HepG2 (cell line): ENCODE measurements at regions of chr16 and their contacts with region 1.

Region 1: GRCh38 chr16:23556881-23557778 is at the starts of genes EARS2 and UBFD1:
- DNase-seq: peak; percentile 100
- ATAC-seq: peak; percentile 96
- H3K4me3 ChIP-seq: peak within 1 kb of the TSS; percentile 96 to 98 (median 97)
- H3K27ac ChIP-seq: peak within 1 kb of the TSS; percentile 86
- H3K4me1 ChIP-seq: peaks cover 48% of the 10 kb centered on the region
- H3K27me3 ChIP-seq: peaks cover 0 to 3% of the 10 kb centered on the region in 2 experiments; a peak in 1 of 5 replicates
- CTCF ChIP-seq: peak; percentile 100
- EP300 ChIP-seq: peak in 1 of 2 experiments; percentile 70; a peak in 3 of 4 replicates
- POLR2A ChIP-seq: peak; percentile 85 to 98
- RAD21 ChIP-seq: peak; percentile 76
- total RNA-seq, gene EARS2: 80.4 and 84.2 TPM in 2 replicates
- total RNA-seq, gene UBFD1: 111 and 142 TPM in 2 replicates

Region 2: DNA sequence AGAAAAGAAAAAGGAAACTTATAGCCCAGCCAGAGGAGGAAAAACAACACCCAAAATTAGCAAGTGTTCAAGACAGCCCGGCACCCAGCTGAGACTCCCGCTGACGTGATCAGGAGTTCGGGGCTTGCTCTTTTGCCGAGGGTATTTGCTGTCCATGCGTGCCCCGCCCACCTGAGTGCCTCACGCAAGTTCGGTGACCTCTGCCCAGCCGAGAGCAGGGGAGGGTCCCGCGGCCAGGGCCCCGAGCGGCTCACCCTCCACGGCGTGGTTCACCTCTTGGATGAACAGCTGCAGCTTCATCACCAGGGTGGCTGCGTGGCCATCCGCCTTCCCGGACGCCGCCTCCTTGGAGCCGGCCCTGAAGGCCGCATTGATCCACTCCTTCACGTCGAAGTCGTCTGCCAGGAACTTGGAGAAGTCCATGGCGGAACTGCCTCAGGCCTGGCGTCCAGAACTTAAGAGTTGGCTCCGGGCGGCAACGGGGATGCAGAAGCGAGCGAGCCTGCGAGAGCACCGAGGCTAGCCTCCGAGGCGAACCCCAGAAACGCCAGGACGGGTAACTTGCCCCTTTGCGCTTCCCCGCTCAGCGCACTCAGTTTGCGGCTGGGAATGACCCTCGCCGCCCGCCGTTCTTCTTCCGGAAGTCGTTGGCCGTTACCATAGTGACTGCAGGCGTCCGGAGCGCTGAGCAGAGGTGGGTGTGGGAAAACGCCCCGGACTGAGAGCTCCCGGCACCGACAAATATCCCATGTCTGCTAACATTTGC is 104.4 kb before region 1 on chr16 and contains the start of gene COG7:
- CTCF ChIA-PET with region 1: no interaction called
- POLR2A ChIA-PET with region 1: interaction called, 3 read pairs
- in situ Hi-C with region 1: no loop called
- intact Hi-C with region 1: loop called (anchors 2 kb)
- DNase-seq: peak; percentile 87
- ATAC-seq: peak; percentile 94
- H3K4me3 ChIP-seq: peak within 1 kb of the TSS; percentile 85 to 100 (median 87)
- H3K27ac ChIP-seq: peak within 1 kb of the TSS; percentile 90
- H3K4me1 ChIP-seq: peaks cover 35% of the 10 kb centered on the region
- H3K27me3 ChIP-seq: no peaks in the 10 kb centered on the region; a peak in 1 of 5 replicates
- CTCF ChIP-seq: peak; percentile 27
- EP300 ChIP-seq: peak in 1 of 2 experiments; percentile 59; a peak in 1 of 4 replicates
- POLR2A ChIP-seq: peak; percentile 89 to 98
- RAD21 ChIP-seq: peak; percentile 57; the same call in 1 of the 2 replicates
- total RNA-seq, gene COG7: 12.6 and 15.4 TPM in 2 replicates

Region 3: DNA sequence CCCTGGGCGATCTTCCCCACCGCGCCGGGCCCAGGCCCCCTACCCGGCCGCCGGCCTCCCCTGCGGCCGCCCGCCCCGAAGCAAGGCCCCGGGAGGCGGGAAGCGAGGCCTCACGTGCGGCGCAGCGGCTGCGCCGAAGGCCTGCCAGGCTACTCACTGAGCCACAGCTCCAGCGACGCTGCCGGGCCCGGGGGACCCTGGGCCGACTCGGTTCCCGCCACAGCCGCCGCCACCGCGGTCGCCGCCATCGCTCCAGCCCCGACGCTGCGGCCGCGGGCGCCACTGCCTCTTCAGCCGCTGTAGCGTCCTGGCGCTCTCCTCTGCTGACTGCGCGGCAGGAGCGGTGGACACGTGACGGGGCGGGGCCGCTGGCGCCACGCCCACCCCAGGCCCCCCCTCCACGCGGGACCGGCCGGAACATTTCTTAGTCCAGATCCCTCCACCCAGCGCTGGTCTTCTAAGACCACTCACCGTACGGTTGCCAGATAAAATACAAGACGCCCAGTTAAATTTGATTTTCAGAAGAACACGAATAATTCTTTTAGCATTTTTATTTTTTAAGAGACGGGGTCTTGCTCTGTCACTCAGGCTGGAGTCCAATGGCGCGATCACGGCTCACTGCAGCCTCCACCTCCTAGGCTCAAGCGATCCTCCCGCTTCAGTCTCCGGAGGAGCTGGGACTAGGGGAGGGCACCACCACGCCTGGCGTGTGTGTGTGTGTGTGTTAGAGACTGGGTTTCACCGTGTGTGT is 46.8 kb before region 1 on chr16 and contains the start of gene GGA2:
- CTCF ChIA-PET with region 1: no interaction called
- POLR2A ChIA-PET with region 1: interaction called, 8 read pairs
- in situ Hi-C with region 1: no loop called
- intact Hi-C with region 1: loop called (anchors 1 kb)
- DNase-seq: peak; percentile 79
- ATAC-seq: peak; percentile 90
- H3K4me3 ChIP-seq: peak within 1 kb of the TSS; percentile 75 to 92 (median 91)
- H3K27ac ChIP-seq: peak within 1 kb of the TSS; percentile 74
- H3K4me1 ChIP-seq: peaks cover 76% of the 10 kb centered on the region
- H3K27me3 ChIP-seq: no peaks in the 10 kb centered on the region; a peak in 1 of 5 replicates
- CTCF ChIP-seq: peak; percentile 65
- EP300 ChIP-seq: peak in 1 of 2 experiments; percentile 33; a peak in 1 of 4 replicates
- POLR2A ChIP-seq: peak; percentile 95 to 99
- RAD21 ChIP-seq: peak; percentile 94
- total RNA-seq, gene GGA2: 69.8 and 93.1 TPM in 2 replicates

Region 4: GRCh38 chr16:23534868-23535860 is 22.0 kb before region 1 on chr16:
- CTCF ChIA-PET with region 1: interaction called, 8 read pairs
- POLR2A ChIA-PET with region 1: interaction called, 96 read pairs
- in situ Hi-C with region 1: no loop called
- intact Hi-C with region 1: loop called (anchors 2 kb)
- DNase-seq: no peak
- ATAC-seq: no peak
- H3K4me3 ChIP-seq: no peak overlapping the region
- H3K27ac ChIP-seq: no peak overlapping the region
- H3K4me1 ChIP-seq: peaks cover 35% of the 10 kb centered on the region
- H3K27me3 ChIP-seq: no peaks in the 10 kb centered on the region
- CTCF ChIP-seq: no peak
- EP300 ChIP-seq: no peak
- POLR2A ChIP-seq: no peak
- RAD21 ChIP-seq: no peak

Region 5: DNA sequence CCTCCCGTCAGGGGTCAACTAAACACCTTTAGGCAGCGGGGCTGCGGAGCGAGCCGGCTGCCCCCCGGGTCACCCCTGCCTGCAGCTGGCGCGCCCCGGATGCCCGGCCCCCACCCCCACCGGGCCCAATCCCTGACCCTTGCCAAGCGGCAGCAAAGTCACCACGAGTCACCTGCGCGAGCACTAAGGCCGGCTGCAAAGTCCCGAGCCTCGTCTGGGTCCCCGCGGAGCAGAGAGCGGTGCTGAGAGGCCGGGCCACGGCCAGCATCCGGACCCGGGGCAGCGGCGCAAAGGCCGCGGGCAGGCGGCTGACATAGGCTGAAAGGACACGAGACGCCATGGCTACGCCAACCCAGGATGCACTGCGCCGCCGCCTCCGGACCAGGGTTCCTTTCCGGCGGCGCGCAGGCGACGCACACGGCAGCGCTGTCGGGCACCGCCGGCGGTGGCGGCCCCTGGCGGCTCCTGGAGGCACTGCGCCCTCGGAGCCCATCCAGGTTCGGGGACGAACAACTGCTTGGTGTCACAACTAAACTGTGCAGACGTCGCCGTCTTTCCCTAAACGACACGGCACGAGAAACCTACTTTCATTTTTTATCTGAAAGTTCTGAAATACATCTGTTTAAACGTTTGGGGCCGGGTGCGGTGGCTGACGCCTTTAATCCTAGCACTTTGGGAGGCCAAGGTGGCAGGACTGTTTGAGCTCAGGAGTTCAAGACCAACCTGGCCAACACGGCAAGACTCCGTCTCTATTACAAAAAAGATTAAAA is 39.0 kb after region 1 on chr16 and contains the start of gene NDUFAB1:
- CTCF ChIA-PET with region 1: interaction called, 12 read pairs
- POLR2A ChIA-PET with region 1: interaction called, 28 read pairs
- in situ Hi-C with region 1: no loop called
- intact Hi-C with region 1: loop called (anchors 1 kb)
- DNase-seq: peak; percentile 91
- ATAC-seq: peak; percentile 96
- H3K4me3 ChIP-seq: peak within 1 kb of the TSS; percentile 72 to 98 (median 97)
- H3K27ac ChIP-seq: peak within 1 kb of the TSS; percentile 80
- H3K4me1 ChIP-seq: peaks cover 31% of the 10 kb centered on the region
- H3K27me3 ChIP-seq: peaks cover 0 to 5% of the 10 kb centered on the region in 2 experiments; a peak in 1 of 5 replicates
- CTCF ChIP-seq: peak; percentile 96
- EP300 ChIP-seq: peak in 1 of 2 experiments; percentile 58; a peak in 1 of 4 replicates
- POLR2A ChIP-seq: peak; percentile 93 to 97
- RAD21 ChIP-seq: peak; percentile 87
- total RNA-seq, gene NDUFAB1: 601 and 760 TPM in 2 replicates

Region 6: GRCh38 chr16:23754594-23755483 is 197.7 kb after region 1 on chr16 and contains the start of gene CHP2:
- CTCF ChIA-PET with region 1: no interaction called
- POLR2A ChIA-PET with region 1: no interaction called
- in situ Hi-C with region 1: no loop called
- intact Hi-C with region 1: no loop called
- DNase-seq: no peak
- ATAC-seq: peak; percentile 50
- H3K4me3 ChIP-seq: peak within 1 kb of the TSS; percentile 20 to 61 (median 36); a peak in 5 of 6 replicates
- H3K27ac ChIP-seq: no peak within 1 kb of the TSS
- H3K4me1 ChIP-seq: peaks cover 9% of the 10 kb centered on the region; the same call in 1 of the 2 replicates
- H3K27me3 ChIP-seq: peaks cover 5 to 24% of the 10 kb centered on the region in 2 experiments; a peak in 4 of 5 replicates
- CTCF ChIP-seq: 0 out of 2 replicates have a peak, but pooled peaks have one; percentile 6
- EP300 ChIP-seq: no peak
- POLR2A ChIP-seq: no peak
- RAD21 ChIP-seq: no peak
- total RNA-seq, gene CHP2: not detected in 2 replicates